T-cell (primary cell): ENCODE measurements at regions of chr11 and their contacts with region 1.

Region 1: GRCh38 chr11:10534316-10534715 is 6.7 kb downstream of the RNF141 start:
- DNase-seq: no peak
- ATAC-seq: no peak
- H3K4me3 ChIP-seq: no peak overlapping the region
- H3K4me3 Mint-ChIP-seq: no peak overlapping the region
- H3K27ac ChIP-seq: no peak overlapping the region
- H3K27ac Mint-ChIP-seq: no peak overlapping the region
- H3K4me1 ChIP-seq: peaks cover 0 to 2% of the 10 kb centered on the region in 2 experiments
- H3K4me1 Mint-ChIP-seq: peaks cover 10 to 29% (median 18%) of the 10 kb centered on the region in 3 donors
- H3K27me3 ChIP-seq: no peaks in the 10 kb centered on the region
- H3K27me3 Mint-ChIP-seq: no peaks in the 10 kb centered on the region

Region 2: DNA sequence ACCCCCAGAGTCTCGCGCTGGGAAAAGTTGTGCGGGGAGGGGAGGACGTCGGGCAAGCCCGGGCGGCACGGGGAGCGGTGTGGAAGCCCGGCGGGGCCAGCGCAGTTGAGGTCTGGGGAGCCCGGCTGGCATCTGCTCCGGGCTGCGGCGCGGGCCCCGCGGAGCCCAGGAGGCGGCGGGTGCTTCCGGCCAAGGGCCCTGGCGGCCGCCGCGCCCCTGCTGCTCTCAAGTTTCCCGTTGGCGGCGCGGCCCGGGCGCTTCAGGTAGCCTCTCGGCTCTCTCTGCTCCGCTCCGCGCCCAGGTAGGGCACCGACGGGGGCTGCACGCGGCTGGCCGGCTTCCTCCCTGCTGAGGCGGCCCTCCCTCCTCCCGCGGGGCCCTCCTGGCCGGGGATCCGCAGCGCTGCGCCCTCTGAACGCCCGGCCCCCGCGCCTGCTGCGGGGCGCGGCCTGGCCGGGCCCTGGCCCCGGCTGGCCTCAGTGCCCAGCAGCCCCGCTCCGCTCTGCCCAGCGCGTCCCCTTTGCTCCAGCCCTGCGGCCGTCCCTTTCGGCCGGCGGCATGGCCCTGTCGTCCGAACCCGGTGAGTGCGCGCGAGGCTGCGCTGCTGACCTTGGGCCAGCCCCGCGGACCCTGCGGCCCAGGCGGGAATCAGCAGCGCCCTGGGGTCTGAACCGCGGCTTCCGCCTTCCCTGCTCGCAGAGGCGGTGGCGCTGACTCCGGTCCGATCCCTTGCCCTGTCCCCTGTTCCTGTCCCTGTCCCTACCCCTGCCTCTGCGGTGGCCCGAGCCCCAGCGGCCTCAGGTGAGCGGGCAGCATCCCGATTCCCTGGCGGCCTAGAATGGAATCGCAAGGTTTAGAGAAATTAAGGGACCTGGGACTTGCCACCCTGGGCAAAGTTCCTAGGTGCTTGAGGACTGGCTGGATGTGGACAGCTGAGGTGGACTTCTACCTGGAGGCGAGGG is 83.6 kb before region 1 on chr11:
- CTCF ChIA-PET with region 1: no interaction called
- POLR2A ChIA-PET with region 1: interaction called in 1 of 2 experiments, 29 read pairs
- DNase-seq: peak in 32 of 35 experiments; percentile 19 to 70 (median 42)
- ATAC-seq: peak; percentile 77 to 88 (median 81)
- H3K4me3 ChIP-seq: peak overlapping the region; percentile 54 to 64
- H3K4me3 Mint-ChIP-seq: peak overlapping the region; percentile 80 to 93 (median 91)
- H3K27ac ChIP-seq: peak overlapping the region; percentile 68
- H3K27ac Mint-ChIP-seq: peak overlapping the region; percentile 93 to 95
- H3K4me1 ChIP-seq: peaks cover 17 to 34% of the 10 kb centered on the region in 2 experiments
- H3K4me1 Mint-ChIP-seq: peaks cover 50 to 60% (median 56%) of the 10 kb centered on the region in 3 donors
- H3K27me3 ChIP-seq: no peaks in the 10 kb centered on the region
- H3K27me3 Mint-ChIP-seq: no peaks in the 10 kb centered on the region

Region 3: DNA sequence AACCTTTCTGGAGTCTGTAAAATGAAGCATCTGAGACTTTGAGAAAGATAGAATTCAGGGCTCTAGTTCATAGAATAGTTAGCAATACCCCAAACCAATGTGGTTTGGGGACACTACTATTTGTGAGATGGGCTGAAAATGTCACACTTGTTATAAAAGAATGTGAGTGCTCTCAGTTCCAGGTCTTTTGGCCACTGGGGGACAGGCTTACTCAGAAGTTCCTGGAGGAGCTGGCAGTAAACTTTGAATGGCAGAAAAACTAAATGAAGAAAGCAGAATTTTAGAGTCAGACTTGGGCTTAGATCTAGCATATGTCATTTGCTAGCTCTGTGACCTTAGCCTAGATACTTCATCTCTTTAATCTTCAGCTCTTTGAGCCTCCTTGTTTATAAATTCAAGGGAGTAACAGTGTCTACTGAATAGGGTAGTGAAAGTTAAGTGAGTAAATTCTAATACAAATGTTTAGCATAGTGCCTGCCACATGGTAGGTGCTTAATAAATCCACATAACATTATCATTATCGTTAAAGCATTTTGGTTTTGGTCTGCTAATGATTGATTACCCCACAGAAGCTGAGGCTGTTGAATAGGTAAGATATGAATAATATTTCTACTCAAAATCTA is 30.5 kb after region 1 on chr11:
- CTCF ChIA-PET with region 1: no interaction called
- POLR2A ChIA-PET with region 1: no interaction called
- DNase-seq: no peak
- ATAC-seq: no peak
- H3K4me3 ChIP-seq: no peak overlapping the region
- H3K4me3 Mint-ChIP-seq: no peak overlapping the region
- H3K27ac ChIP-seq: no peak overlapping the region
- H3K27ac Mint-ChIP-seq: no peak overlapping the region
- H3K4me1 ChIP-seq: no peaks in the 10 kb centered on the region
- H3K4me1 Mint-ChIP-seq: no peaks in the 10 kb centered on the region
- H3K27me3 ChIP-seq: no peaks in the 10 kb centered on the region
- H3K27me3 Mint-ChIP-seq: peaks cover 5 to 8% of the 10 kb centered on the region in 2 donors

Region 4: DNA sequence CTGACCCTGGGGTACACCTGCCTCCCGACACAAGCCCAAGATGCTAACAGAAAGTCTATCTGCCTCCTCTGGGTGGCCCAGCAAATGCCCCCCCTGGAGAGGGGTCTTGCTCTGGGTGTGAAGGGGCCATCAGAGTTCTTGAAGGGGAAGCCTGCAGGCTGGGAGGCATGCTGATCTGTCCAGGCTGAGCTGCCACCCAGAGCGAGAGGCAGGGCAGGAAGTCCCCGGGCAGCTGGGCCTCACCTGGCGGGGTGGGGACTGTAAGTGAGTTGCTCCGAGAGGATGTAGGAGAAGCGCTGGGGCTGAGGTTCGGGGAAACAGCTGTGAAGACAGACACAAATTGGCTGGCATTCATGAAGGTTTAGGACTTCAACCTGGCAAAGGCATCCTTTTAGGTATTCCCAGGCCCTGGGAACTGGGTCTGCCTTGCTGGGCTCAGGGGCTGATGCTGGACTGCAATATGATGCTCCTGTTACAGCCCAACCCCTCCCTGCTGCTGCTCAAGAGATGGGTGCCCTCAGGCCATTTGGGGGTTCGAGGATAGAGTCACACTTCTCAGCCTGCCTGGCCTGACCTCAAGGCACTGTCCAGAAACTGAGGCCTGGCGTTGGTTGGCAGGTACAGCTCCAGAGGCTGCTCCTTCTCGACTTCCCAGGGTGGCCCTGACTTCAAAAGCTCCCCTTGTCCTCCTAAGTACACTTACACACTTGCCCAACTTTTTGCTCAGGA is 94.4 kb after region 1 on chr11:
- CTCF ChIA-PET with region 1: no interaction called
- POLR2A ChIA-PET with region 1: no interaction called
- DNase-seq: peak in 27 of 35 experiments; percentile 3 to 52 (median 32)
- ATAC-seq: peak; percentile 67 to 92 (median 78)
- H3K4me3 ChIP-seq: no peak overlapping the region
- H3K4me3 Mint-ChIP-seq: no peak overlapping the region
- H3K27ac ChIP-seq: no peak overlapping the region
- H3K27ac Mint-ChIP-seq: no peak overlapping the region
- H3K4me1 ChIP-seq: peaks cover 20 to 26% of the 10 kb centered on the region in 2 experiments
- H3K4me1 Mint-ChIP-seq: peaks cover 15 to 21% (median 19%) of the 10 kb centered on the region in 3 donors
- H3K27me3 ChIP-seq: peaks cover 0 to 9% of the 10 kb centered on the region in 2 experiments
- H3K27me3 Mint-ChIP-seq: peaks cover 0 to 1% of the 10 kb centered on the region in 2 donors